Cardiac septum (tissue), 1 donor: ENCODE measurements at regions of chr3 and their contacts with region 1.

Region 1: DNA sequence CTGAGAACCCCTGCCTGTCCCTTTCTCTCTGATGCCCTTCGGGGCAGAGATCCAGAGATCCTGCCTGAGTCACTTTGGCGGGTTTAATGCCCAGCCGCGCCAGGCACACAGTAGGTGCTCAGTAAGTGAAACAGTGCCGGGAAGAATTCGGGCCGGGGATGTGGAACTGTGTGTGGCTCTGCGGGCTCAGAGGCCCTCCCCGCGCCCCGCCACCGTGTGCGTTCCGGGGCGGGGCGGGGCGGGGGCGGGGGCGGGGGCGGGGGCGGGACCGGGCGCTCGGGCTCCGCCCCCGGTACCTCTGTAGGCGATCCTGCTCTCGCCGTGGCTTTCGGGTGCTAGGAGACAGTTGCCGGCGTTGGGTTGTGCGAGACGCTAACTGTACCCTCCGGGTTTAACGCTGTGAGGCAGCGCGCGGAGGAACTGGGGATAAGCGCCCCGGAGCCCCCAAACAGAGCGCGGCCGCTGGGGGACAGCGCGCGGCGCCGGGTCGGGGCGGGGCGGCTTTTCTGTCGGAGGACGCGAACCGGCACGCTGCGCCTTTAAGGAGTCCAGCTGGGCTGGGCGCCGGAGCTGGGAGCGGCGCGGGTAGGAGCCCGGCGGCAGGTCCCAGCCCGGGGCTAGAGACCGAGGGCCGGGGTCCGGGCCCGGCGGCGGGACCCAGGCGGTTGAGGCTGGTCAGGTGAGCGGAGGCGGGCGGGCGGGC is at the start of gene ABHD6:
- DNase-seq: peak; percentile 91
- total RNA-seq, gene ABHD6: 4.9 TPM

Region 2: DNA sequence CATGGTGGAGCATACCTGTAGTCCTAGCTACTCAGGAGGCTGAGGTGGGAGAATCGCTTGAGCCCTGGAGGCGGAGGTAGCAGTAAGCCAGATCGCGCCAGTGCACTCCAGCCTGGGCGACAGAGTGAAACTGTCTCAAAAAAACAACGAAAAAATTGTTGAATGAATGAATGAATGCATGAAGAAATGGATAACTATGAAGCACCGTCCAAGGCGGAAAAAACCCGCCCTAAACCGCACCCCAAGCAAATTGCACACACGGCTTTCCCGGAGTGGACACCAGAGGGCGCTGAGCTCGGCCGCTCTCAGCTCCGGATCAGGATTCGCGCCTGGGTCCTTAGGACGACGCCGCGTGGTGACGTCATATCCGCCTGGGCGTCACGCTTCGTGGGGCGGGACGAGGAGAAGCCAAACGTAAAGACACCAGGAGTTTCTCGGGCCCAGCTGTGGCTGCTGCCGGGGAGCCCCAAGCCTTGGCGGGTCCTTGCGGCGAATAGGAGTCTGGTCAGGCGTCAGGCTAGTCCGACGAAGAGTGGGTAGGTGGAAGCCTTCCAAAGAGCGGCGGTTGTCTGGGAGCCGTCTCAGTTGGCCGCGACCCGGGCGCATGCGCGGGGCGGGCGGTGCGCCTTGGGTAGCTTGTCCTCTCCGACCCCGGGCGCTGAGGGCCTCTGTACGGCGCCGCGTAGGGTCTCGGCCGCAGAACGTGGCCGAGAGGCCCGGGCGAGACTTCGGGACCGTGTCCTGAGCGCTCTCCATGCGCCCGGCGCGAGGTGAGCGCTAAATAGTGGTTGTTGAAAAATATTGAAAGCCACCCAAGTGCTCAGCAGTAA is 68.7 kb after region 1 on chr3 and contains the starts of genes HTD2 and RPP14:
- intact Hi-C with region 1: loop called (anchors 1 kb)
- DNase-seq: peak; percentile 99
- total RNA-seq, gene HTD2: 12.9 TPM
- total RNA-seq, gene RPP14: 17.0 TPM